Dorsolateral prefrontal cortex (tissue), 120 donors: ENCODE measurements at regions of chr7 and their contacts with region 1.

Region 1: GRCh38 chr7:101815835-101816493 is 1.5 kb upstream of the CUX1 start:
- DNase-seq: peak; percentile 37 to 72 (median 55)
- H3K4me3 ChIP-seq: peak overlapping the region in 56 of 59 donors; percentile 41 to 89 (median 70)
- H3K27ac ChIP-seq: peak overlapping the region in 42 of 59 donors; percentile 24 to 92 (median 68)
- H3K27me3 ChIP-seq: no peaks in the 10 kb centered on the region
- CTCF ChIP-seq: peak in 23 of 56 donors; percentile 1 to 42 (median 16)

Region 2: DNA sequence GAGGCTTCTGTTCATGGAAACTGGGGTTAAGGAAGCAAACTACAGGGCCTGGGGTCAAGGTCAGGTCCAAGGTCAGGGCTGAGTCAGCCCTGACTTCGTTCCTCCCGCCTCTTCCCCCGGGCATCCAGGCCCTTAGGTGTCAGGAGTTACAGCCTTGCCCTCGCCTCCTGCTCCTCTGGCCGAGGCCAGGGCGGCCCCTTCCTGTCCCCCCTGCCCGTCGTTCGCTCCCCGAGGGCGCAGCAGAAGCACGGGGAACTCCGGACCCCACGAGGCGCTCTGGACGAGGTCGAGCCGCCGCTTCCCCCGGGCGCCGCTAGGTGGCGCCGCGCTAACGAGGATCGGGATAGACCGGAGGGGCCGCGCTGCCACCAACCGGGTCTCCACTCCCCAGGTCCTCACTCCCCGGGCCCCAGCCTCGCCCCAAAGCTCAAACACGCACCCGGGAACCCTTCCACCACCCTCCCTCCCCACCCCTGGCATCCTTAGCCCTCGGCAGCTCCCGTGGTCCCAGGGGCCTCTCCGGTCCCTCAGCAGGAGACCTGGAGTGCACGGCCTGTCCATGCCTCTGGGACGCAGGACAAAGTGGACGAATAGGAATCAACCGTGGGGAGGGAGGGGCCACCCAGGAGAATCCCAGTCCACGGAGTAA is 127.7 kb before region 1 on chr7:
- intact Hi-C with region 1: loop called (anchors 5 kb)
- DNase-seq: peak; percentile 58 to 82 (median 67)
- H3K4me3 ChIP-seq: peak overlapping the region in 42 of 59 donors; percentile 1 to 51 (median 34)
- H3K27ac ChIP-seq: no peak overlapping the region
- H3K27me3 ChIP-seq: peaks cover 0 to 3% (median 0%) of the 10 kb centered on the region in 45 donors
- CTCF ChIP-seq: peak; percentile 74 to 98 (median 96)

Region 3: GRCh38 chr7:101875283-101875889 is 59.4 kb after region 1 on chr7:
- intact Hi-C with region 1: loop called in 1 of 2 experiments (anchors 5 kb)
- DNase-seq: no peak
- H3K4me3 ChIP-seq: no peak overlapping the region
- H3K27ac ChIP-seq: peak overlapping the region in 2 of 59 donors; percentile 28 to 48
- H3K27me3 ChIP-seq: no peaks in the 10 kb centered on the region
- CTCF ChIP-seq: no peak

Region 4: GRCh38 chr7:101891936-101892640 is 76.1 kb after region 1 on chr7:
- intact Hi-C with region 1: loop called in 1 of 2 experiments (anchors 10 kb)
- DNase-seq: no peak
- H3K4me3 ChIP-seq: peak overlapping the region in 2 of 59 donors; percentile 3 to 6
- H3K27ac ChIP-seq: no peak overlapping the region
- H3K27me3 ChIP-seq: no peaks in the 10 kb centered on the region
- CTCF ChIP-seq: no peak

Region 5: GRCh38 chr7:102111061-102111743 is 295.2 kb after region 1 on chr7:
- intact Hi-C with region 1: loop called in 1 of 2 experiments (anchors 10 kb)
- DNase-seq: peak in 8 of 10 donors; percentile 16 to 67 (median 50)
- H3K4me3 ChIP-seq: peak overlapping the region in 55 of 59 donors; percentile 4 to 62 (median 37)
- H3K27ac ChIP-seq: peak overlapping the region in 56 of 59 donors; percentile 1 to 85 (median 70)
- H3K27me3 ChIP-seq: no peaks in the 10 kb centered on the region
- CTCF ChIP-seq: peak in 2 of 56 donors; percentile 8

Region 6: DNA sequence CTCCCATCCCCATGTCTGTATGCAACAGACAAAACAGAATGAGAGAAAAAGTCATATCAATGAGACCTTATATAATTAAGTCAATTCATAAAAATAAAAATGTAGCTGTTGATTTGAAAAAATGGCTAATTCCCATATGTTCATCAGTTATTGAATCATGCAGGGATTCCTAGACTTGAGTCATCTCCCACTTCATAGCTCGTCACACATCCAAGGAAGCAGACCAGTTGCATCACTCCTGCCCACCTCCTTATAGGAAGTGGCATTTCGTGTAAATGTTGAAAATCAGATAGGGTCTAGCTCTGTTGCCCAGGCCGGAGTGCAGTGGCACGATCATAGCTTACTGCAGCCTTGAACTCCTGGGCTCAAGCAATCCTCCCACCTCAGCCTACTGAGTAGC is 414.6 kb after region 1 on chr7:
- intact Hi-C with region 1: loop called in 1 of 2 experiments (anchors 5 kb)
- DNase-seq: no peak
- H3K4me3 ChIP-seq: no peak overlapping the region
- H3K27ac ChIP-seq: no peak overlapping the region
- H3K27me3 ChIP-seq: no peaks in the 10 kb centered on the region
- CTCF ChIP-seq: no peak

Region 7: GRCh38 chr7:102236592-102237287 is 420.8 kb after region 1 on chr7:
- intact Hi-C with region 1: loop called (anchors 2 to 5 kb)
- DNase-seq: peak; percentile 51 to 80 (median 68)
- H3K4me3 ChIP-seq: no peak overlapping the region
- H3K27ac ChIP-seq: no peak overlapping the region
- H3K27me3 ChIP-seq: no peaks in the 10 kb centered on the region
- CTCF ChIP-seq: peak; percentile 53 to 91 (median 83)